GM10248 (cell line): ENCODE measurements at regions of chr7 and their contacts with region 1.

Region 1: GRCh38 chr7:100106633-100107032 is 5.2 kb downstream of the AP4M1 start:
- DNase-seq: no peak
- CTCF ChIP-seq: no peak

Region 2: GRCh38 chr7:100675581-100676350 is 569.1 kb after region 1 on chr7:
- CTCF ChIA-PET with region 1: no interaction called
- POLR2A ChIA-PET with region 1: interaction called, 12 read pairs
- DNase-seq: peak; percentile 83
- CTCF ChIP-seq: no peak